Ascending aorta (tissue), 2 donors: ENCODE measurements at regions of chr9 and their contacts with region 1.

Region 1: GRCh38 chr9:16515879-16516301 is 354.6 kb downstream of the BNC2 start:
- DNase-seq: no peak
- H3K4me3 ChIP-seq: peak overlapping the region in 1 of 2 donors; percentile 42
- H3K27ac ChIP-seq: peak overlapping the region; percentile 47 to 51
- H3K4me1 ChIP-seq: peaks cover 0 to 20% of the 10 kb centered on the region in 2 donors
- H3K27me3 ChIP-seq: no peaks in the 10 kb centered on the region
- CTCF ChIP-seq: no peak

Region 2: GRCh38 chr9:16626577-16627131 is 110.8 kb after region 1 on chr9:
- intact Hi-C with region 1: loop called (anchors 5 kb)
- DNase-seq: peak in 1 of 2 donors; percentile 66
- H3K4me3 ChIP-seq: no peak overlapping the region
- H3K27ac ChIP-seq: peak overlapping the region in 1 of 2 donors; percentile 38
- H3K4me1 ChIP-seq: peaks cover 0 to 21% of the 10 kb centered on the region in 2 donors
- H3K27me3 ChIP-seq: no peaks in the 10 kb centered on the region
- CTCF ChIP-seq: no peak

Region 3: GRCh38 chr9:16656432-16657169 is 140.7 kb after region 1 on chr9:
- intact Hi-C with region 1: no loop called
- DNase-seq: no peak
- H3K4me3 ChIP-seq: no peak overlapping the region
- H3K27ac ChIP-seq: no peak overlapping the region
- H3K4me1 ChIP-seq: no peaks in the 10 kb centered on the region
- H3K27me3 ChIP-seq: no peaks in the 10 kb centered on the region
- CTCF ChIP-seq: no peak